ENCODE measurements at regions of chr6 and their contacts with region 1.

Region 1: GRCh38 chr6:121055572-121056163 is 278.6 kb downstream of the TBC1D32 start:
- DNase-seq: peak; percentile 24
- H3K4me3 ChIP-seq: no peak overlapping the region
- H3K27ac ChIP-seq: no peak overlapping the region
- H3K27me3 ChIP-seq: no peaks in the 10 kb centered on the region
- CTCF ChIP-seq: peak; percentile 82

Region 2: DNA sequence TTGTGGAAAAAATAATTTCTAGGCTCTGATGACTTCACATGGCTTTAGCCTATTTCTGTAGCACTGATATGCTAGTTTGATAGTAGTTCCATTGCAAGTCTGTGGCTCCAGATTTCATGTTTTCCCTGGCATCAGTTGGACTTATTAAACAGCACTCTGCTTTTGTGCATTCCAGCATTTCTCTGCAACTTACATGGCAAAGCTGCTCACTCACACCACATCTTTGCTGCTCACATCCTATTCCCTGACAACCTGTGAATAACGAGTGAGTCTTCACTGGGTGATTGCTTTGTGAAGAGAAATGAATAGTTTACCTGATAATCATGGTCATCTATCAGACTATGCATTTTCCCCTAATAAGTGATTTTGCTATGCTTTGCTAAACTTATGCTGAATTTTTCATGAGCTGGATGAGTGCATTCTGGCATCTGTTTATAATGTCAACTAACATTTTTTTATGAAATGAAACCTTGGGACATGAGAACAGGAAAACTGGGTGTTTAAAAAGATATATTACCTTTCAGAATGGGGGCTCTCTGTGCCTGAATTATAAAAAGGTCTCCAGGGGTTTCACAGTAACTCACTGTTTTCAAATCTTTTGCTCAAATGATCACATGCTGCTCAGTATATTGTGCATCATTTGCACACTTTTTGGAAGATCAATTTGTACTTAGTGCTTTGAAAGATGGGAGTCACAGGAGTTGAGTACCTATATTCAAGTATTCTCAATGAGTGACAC is 23.2 kb before region 1 on chr6:
- CTCF ChIA-PET with region 1: no interaction called
- POLR2A ChIA-PET with region 1: no interaction called
- DNase-seq: no peak
- H3K4me3 ChIP-seq: no peak overlapping the region
- H3K27ac ChIP-seq: no peak overlapping the region
- H3K27me3 ChIP-seq: no peaks in the 10 kb centered on the region
- CTCF ChIP-seq: no peak

Region 3: DNA sequence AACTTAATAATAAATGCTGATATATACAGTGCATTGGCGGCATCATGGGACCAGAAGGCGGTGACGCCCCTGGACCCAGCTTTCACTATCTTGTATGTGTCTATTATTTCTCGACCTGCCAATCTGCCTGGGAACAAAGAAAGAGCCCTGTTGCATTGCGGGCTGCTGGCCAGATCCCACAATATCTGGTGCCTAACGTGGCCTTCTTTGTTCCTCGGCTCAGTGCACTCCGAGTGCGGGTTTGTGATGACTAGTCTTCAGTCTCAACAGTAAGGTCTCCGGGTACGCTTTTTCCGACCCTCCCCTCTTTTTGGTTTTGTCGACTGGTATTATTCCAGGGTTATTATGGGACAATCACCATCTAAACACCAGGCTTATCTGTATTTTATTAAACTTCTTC is 12.9 kb before region 1 on chr6:
- CTCF ChIA-PET with region 1: interaction called, 10 read pairs
- POLR2A ChIA-PET with region 1: no interaction called
- DNase-seq: no peak
- H3K4me3 ChIP-seq: no peak overlapping the region
- H3K27ac ChIP-seq: no peak overlapping the region
- H3K27me3 ChIP-seq: no peaks in the 10 kb centered on the region
- CTCF ChIP-seq: no peak

Region 4: GRCh38 chr6:121076119-121076518 is 20.5 kb after region 1 on chr6:
- CTCF ChIA-PET with region 1: interaction called, 19 read pairs
- POLR2A ChIA-PET with region 1: no interaction called
- DNase-seq: no peak
- H3K4me3 ChIP-seq: no peak overlapping the region
- H3K27ac ChIP-seq: no peak overlapping the region
- H3K27me3 ChIP-seq: no peaks in the 10 kb centered on the region
- CTCF ChIP-seq: no peak

Region 5: DNA sequence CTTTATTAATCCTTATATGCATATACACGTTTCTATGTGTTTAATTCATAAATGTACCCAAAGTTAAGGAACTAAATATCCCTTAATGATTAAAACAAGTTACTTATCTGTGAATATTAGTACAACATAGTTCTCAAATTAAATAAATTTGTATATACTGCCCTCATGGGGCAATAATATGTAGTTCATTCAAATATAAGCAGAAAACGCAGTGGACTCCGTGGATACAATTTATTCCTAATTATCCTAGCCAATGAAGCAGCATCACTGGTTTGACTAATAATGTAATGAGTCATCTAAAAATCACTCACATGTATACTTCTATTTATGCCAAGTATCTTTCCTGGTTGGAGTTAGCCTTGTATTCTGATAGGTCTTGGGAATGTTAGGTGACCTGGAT is 167.0 kb after region 1 on chr6:
- CTCF ChIA-PET with region 1: interaction called, 60 read pairs
- POLR2A ChIA-PET with region 1: no interaction called
- DNase-seq: peak; percentile 21
- H3K4me3 ChIP-seq: no peak overlapping the region
- H3K27ac ChIP-seq: no peak overlapping the region
- H3K27me3 ChIP-seq: no peaks in the 10 kb centered on the region
- CTCF ChIP-seq: peak; percentile 38

Region 6: DNA sequence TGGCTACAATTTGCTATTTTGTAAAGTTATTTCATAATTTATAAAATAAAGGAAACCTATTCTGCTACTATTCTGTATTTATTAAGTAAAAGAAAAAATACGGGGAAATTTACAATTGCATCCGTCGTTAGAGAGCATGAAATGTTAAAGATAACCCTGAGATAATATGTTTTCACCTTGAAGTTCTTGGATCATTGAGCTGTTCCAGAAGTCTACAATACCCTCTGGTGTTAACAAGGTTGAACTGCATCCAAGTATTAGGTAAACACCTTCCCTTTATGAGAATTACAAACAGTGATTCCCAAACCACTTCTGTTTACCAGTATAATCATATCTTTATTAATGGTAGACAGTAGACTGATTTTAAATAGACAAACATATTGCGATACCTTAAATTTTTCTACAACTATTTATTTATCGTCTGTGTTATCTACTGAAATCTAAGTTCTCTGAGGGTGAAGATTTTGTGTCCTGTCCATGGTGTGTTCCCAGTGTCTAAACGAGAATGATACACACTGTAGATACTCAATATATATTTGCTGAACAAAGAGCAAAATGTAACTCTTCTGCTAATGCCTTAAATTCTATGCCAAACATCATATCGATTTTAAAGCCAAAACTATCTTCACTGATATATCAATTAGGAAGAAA is 250.4 kb after region 1 on chr6:
- CTCF ChIA-PET with region 1: interaction called, 31 read pairs
- POLR2A ChIA-PET with region 1: no interaction called
- DNase-seq: no peak
- H3K4me3 ChIP-seq: no peak overlapping the region
- H3K27ac ChIP-seq: no peak overlapping the region
- H3K27me3 ChIP-seq: no peaks in the 10 kb centered on the region
- CTCF ChIP-seq: peak; percentile 50

Region 7: GRCh38 chr6:121399966-121400365 is 344.3 kb after region 1 on chr6:
- CTCF ChIA-PET with region 1: interaction called, 34 read pairs
- POLR2A ChIA-PET with region 1: no interaction called
- DNase-seq: no peak
- H3K4me3 ChIP-seq: no peak overlapping the region
- H3K27ac ChIP-seq: no peak overlapping the region
- H3K27me3 ChIP-seq: no peaks in the 10 kb centered on the region
- CTCF ChIP-seq: no peak

Region 8: DNA sequence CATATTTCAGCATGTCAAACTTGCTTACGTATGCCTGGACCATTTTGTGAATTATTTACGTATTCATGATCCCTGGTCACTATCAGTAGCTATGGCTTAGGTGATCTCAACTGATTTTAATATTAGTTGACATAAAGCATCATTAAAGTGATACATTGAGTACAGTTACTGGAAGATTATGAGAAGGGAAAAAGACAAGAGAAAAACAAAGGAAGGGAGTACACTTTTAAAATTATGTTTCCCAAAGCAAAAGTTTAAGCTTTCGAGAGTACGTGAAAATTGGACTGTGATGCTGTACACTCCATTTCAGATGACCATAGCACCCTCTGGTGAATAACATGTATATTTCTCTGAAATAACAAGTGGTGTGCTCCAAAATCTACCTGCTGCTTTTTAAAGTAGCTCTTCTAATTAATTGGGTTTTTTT is 1128.7 kb after region 1 on chr6:
- CTCF ChIA-PET with region 1: interaction called, 17 read pairs
- POLR2A ChIA-PET with region 1: no interaction called
- DNase-seq: peak; percentile 11
- H3K4me3 ChIP-seq: peak overlapping the region; percentile 23; the same call in 1 of the 2 replicates
- H3K27ac ChIP-seq: no peak overlapping the region
- H3K27me3 ChIP-seq: no peaks in the 10 kb centered on the region
- CTCF ChIP-seq: peak; percentile 54

Measured in AG04450 (cell line).